Colonic mucosa (tissue), 4 donors: ENCODE measurements at regions of chr1 and their contacts with region 1.

Region 1: GRCh38 chr1:153510984-153511410 is 24.8 kb downstream of the S100A6 start:
- DNase-seq: peak; percentile 91
- H3K4me3 ChIP-seq: no peak overlapping the region
- H3K27ac ChIP-seq: no peak overlapping the region
- H3K4me1 ChIP-seq: peaks cover 4% of the 10 kb centered on the region
- H3K27me3 ChIP-seq: no peaks in the 10 kb centered on the region
- CTCF ChIP-seq: peak; percentile 75

Region 2: GRCh38 chr1:153561466-153561985 is 50.5 kb after region 1 on chr1:
- intact Hi-C with region 1: no loop called
- DNase-seq: no peak
- H3K4me3 ChIP-seq: no peak overlapping the region
- H3K27ac ChIP-seq: no peak overlapping the region
- H3K4me1 ChIP-seq: peaks cover 12% of the 10 kb centered on the region
- H3K27me3 ChIP-seq: no peaks in the 10 kb centered on the region
- CTCF ChIP-seq: no peak

Region 3: DNA sequence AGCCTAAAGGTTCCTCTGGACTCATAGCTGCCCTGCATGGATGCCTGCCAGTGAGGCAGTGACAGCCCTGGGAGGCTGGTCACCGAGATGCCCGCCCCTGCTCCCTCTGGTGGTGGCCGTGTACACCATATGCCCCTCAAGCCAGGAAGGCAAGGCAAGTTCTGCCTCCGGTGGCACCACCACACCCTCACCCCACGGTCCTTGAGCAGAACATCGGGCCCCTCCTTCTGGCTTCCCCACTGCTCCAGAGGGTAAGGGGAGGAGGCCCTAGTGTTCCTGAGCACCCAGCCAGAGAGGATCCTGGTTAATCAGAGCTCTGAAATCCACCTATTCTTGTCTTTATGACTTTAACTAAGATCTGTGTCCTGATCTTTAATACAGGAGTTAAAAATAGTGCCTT is 106.7 kb after region 1 on chr1:
- intact Hi-C with region 1: loop called (anchors 5 kb)
- DNase-seq: peak; percentile 90
- H3K4me3 ChIP-seq: no peak overlapping the region
- H3K27ac ChIP-seq: peak overlapping the region; percentile 67
- H3K4me1 ChIP-seq: peaks cover 6% of the 10 kb centered on the region
- H3K27me3 ChIP-seq: no peaks in the 10 kb centered on the region
- CTCF ChIP-seq: peak; percentile 42

Region 4: DNA sequence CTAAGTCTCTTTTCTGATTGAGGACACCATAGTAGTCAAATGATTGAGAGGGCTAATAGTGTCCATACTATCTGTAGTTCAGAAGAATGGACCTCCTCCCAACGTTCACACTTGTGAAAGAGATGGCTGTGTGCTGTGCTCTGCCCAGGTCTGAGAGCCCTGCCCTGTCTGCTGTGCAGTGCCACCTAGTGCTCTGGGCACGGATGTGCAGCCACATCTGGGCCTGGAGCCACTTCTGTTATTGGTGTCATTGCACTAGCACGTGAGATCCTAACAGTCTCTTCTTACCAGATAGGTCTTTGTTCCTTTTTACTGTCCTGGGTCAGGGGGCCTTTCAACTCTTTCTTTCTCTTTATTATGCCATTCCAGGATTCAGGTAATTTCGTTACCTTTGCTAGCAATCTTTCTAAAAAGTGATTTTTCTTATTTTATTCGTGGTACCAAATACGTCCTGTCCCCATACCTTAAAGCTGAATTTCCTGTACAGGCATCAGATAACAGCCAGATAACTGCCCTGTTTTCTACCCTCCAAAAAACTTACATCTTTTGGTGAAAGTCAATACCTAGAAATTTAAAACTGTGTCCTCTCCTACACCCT is 238.5 kb after region 1 on chr1:
- intact Hi-C with region 1: loop called (anchors 5 kb)
- DNase-seq: peak; percentile 84
- H3K4me3 ChIP-seq: no peak overlapping the region
- H3K27ac ChIP-seq: no peak overlapping the region
- H3K4me1 ChIP-seq: peaks cover 17% of the 10 kb centered on the region
- H3K27me3 ChIP-seq: no peaks in the 10 kb centered on the region
- CTCF ChIP-seq: peak; percentile 95

Region 5: DNA sequence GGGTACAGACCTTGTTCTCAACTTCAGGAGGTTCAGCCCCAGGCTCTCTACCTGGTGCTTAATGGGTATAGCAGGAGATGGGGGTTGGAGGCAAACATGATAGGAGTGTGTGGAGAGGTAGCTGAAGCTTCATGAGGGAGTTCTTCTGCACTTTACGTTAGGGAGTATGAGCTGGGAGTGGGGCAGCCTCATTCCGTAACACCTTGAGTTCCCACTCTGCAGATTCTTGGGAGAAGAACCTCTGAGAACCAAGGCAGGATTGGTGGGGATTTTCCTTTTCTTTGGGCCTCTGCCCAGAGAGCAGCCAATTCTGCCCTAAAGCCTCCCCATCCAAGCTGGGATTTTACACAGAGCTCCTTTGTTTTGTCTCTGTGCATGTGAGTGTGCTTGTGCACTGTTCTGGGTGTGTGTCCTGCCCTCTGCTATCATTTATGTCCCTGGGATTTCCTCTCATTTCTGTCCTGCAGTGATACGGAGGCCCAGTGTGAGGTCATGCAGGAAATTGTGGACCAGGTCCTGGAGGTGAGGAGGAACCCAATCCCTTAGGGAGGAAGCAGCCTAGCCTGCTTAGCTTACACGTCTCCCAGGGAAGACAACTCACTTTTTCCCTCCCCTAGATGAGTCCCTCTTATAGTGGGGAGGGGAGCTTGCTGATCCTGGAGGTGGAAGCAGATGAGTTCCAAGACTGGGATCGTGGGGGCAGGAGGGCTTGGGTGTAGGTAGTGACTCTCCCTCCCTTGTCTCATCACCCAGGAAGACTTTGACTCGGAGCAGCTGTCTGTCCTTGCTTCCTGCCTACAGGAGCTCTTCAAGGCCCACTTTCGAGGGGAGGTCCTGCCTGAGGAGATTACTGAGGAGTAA is 252.6 kb after region 1 on chr1:
- intact Hi-C with region 1: no loop called
- DNase-seq: no peak
- H3K4me3 ChIP-seq: no peak overlapping the region
- H3K27ac ChIP-seq: peak overlapping the region; percentile 11
- H3K4me1 ChIP-seq: peaks cover under 1% of the 10 kb centered on the region
- H3K27me3 ChIP-seq: no peaks in the 10 kb centered on the region
- CTCF ChIP-seq: no peak